BJ (cell line): ENCODE measurements at regions of chr7 and their contacts with region 1.

Region 1: GRCh38 chr7:14924398-14924797 is 21.8 kb upstream of the DGKB start:
- DNase-seq: no peak
- H3K4me3 ChIP-seq: no peak overlapping the region
- H3K27me3 ChIP-seq: no peaks in the 10 kb centered on the region
- CTCF ChIP-seq: no peak

Region 2: GRCh38 chr7:14717816-14718215 is 206.6 kb before region 1 on chr7:
- CTCF ChIA-PET with region 1: interaction called, 32 read pairs
- POLR2A ChIA-PET with region 1: no interaction called
- DNase-seq: no peak
- H3K4me3 ChIP-seq: no peak overlapping the region
- H3K27me3 ChIP-seq: 0 out of 2 replicates have a peak, but pooled peaks cover 1% of the 10 kb centered on the region
- CTCF ChIP-seq: peak; percentile 44